H1 (cell line): ENCODE measurements at regions of chr17 and their contacts with region 1.

Region 1: DNA sequence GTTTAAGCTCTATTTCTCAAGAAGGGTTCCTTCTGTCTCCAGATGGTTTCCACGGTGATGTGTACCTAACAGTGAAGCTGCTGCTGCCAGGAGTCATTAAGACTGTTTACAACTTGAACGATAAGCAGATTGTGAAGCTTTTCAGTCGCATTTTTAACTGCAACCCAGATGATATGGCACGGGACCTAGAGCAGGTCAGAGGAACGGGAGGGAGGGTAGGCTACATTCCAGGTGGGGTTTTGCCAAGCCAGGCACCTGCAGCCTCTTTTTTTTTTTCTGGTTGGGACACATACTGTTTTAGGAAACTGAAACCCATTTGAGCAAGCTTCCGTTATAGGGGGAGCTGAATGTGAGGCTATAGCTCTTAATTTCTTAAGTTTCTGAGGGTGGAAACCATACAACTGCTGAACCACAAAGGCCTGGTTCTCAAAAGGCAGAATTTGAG is 10.6 kb downstream of the LIG3 start:
- DNase-seq: no peak
- H3K4me3 ChIP-seq: no peak overlapping the region
- H3K27ac ChIP-seq: no peak overlapping the region
- H3K4me1 ChIP-seq: no peaks in the 10 kb centered on the region
- H3K27me3 ChIP-seq: no peaks in the 10 kb centered on the region
- CTCF ChIP-seq: no peak
- EP300 ChIP-seq: no peak
- POLR2A ChIP-seq: no peak
- RAD21 ChIP-seq: no peak

Region 2: GRCh38 chr17:34980681-34981537 is 10.0 kb before region 1 on chr17:
- CTCF ChIA-PET with region 1: interaction called, 8 read pairs
- POLR2A ChIA-PET with region 1: interaction called, 44 read pairs
- DNase-seq: peak in 1 of 2 experiments; percentile 72
- H3K4me3 ChIP-seq: peak overlapping the region; percentile 72 to 98 (median 76)
- H3K27ac ChIP-seq: peak overlapping the region; percentile 91
- H3K4me1 ChIP-seq: peaks cover 0 to 6% (median 4%) of the 10 kb centered on the region in 4 experiments; a peak in 4 of 7 replicates
- H3K27me3 ChIP-seq: no peaks in the 10 kb centered on the region
- CTCF ChIP-seq: peak; percentile 19 to 26 (median 24); a peak in 3 of 4 replicates
- EP300 ChIP-seq: no peak
- POLR2A ChIP-seq: peak; percentile 45 to 80
- RAD21 ChIP-seq: no peak; a peak in 1 of 4 replicates

Region 3: DNA sequence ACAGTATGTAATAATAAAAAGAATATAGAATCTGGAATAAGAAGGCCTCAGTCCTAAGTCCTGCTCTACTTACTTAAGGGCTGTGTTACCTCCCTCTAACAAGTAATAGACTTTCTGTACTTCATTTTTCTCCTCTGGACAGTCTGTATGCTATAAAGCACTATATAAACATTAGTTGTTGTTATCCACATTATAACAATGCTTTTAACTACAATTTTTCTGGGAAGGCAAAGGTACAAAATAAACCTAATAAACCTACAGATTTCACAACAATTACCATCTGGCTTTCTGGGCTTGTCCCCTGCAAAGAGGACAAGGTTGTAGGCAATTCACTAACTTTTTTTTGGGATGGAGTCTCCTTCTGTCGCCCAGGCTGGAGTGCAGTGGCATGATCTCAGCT is 39.8 kb after region 1 on chr17:
- CTCF ChIA-PET with region 1: no interaction called
- POLR2A ChIA-PET with region 1: no interaction called
- DNase-seq: no peak
- H3K4me3 ChIP-seq: no peak overlapping the region
- H3K27ac ChIP-seq: no peak overlapping the region
- H3K4me1 ChIP-seq: no peaks in the 10 kb centered on the region
- H3K27me3 ChIP-seq: no peaks in the 10 kb centered on the region
- CTCF ChIP-seq: no peak
- EP300 ChIP-seq: no peak
- POLR2A ChIP-seq: no peak
- RAD21 ChIP-seq: no peak

Region 4: DNA sequence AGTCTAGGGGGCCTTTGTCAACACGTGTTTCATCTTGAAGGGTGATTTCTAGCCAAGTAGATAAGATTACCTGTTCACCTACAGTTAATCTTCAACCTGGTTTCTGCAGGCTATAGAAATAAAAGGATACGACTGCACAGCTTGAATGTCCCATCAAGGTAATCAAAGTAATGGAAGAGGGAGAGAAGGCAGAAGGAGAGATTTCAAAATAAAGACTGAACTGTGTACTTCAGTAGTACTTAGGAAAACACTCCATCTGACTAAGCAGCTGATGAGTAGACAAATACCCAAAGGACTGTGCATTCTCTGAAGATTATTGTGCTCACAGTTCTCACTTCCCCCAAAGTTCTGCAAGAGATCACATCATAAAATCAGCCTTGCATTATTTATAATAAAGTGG is 78.4 kb after region 1 on chr17:
- CTCF ChIA-PET with region 1: no interaction called
- POLR2A ChIA-PET with region 1: no interaction called
- DNase-seq: no peak
- H3K4me3 ChIP-seq: no peak overlapping the region
- H3K27ac ChIP-seq: no peak overlapping the region
- H3K4me1 ChIP-seq: peaks cover 0 to 7% (median 4%) of the 10 kb centered on the region in 4 experiments; a peak in 4 of 7 replicates
- H3K27me3 ChIP-seq: no peaks in the 10 kb centered on the region
- CTCF ChIP-seq: no peak
- EP300 ChIP-seq: no peak
- POLR2A ChIP-seq: no peak
- RAD21 ChIP-seq: no peak

Region 5: GRCh38 chr17:35273684-35274083 is 282.7 kb after region 1 on chr17:
- CTCF ChIA-PET with region 1: no interaction called
- POLR2A ChIA-PET with region 1: no interaction called
- DNase-seq: no peak
- H3K4me3 ChIP-seq: no peak overlapping the region
- H3K27ac ChIP-seq: no peak overlapping the region
- H3K4me1 ChIP-seq: no peaks in the 10 kb centered on the region
- H3K27me3 ChIP-seq: no peaks in the 10 kb centered on the region
- CTCF ChIP-seq: no peak
- EP300 ChIP-seq: no peak
- POLR2A ChIP-seq: no peak
- RAD21 ChIP-seq: no peak